Activated CD4-positive, alpha-beta T cell treated with anti-CD3 and anti-CD28 coated beads, Interleukin-2, amount 10 ng/mL, durations not matched to agents 24 days and 14 days (primary cell): ENCODE measurements at regions of chr16 and their contacts with region 1.

Region 1: GRCh38 chr16:67561824-67562525 is 351 bp upstream of the CTCF start:
- DNase-seq: peak; percentile 99
- H3K4me3 Mint-ChIP-seq: peak overlapping the region; percentile 89
- H3K27ac Mint-ChIP-seq: peak overlapping the region; percentile 93
- H3K4me1 Mint-ChIP-seq: peaks cover 30% of the 10 kb centered on the region
- H3K27me3 Mint-ChIP-seq: no peaks in the 10 kb centered on the region

Region 2: DNA sequence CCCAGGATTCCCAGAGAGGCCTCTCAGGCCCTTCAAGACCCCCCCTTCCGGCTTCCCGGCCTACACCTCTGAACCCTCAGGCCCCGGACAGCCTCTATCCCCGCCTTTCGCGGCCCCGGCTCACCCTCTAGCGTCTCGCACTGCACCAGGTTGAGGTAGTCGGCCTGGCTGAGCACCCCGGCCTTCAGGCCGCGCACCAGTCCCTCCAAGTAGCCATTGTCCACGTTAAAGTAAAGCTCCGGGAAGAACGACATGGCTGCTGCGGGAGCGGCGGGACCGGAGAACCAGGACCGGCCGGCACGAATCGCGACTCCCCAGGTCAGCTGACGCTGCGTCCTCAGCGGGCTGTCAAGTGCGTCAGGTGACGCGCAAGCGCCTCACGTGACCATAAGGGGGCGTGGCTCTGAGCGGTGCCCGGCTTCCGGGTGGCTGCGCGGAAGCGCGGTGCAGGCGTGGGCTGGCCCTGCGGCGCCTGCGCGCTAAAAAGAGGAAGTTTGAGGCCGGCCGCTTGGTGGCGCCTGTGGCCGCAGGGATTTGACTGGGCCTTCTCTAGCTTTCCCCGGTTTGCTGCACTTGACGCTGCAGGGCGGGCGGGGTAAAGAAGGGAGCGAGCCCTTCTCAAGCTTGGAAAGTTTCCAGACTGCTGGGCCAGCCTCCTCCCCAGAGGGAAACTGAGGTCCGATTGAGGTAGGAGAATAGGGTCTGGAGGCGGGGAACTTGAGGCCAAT is 81.0 kb before region 1 on chr16 and contains the start of gene ATP6V0D1:
- intact Hi-C with region 1: loop called (anchors 1 kb)
- DNase-seq: peak; percentile 100
- H3K4me3 Mint-ChIP-seq: peak within 1 kb of the TSS; percentile 100
- H3K27ac Mint-ChIP-seq: peak within 1 kb of the TSS; percentile 97
- H3K4me1 Mint-ChIP-seq: peaks cover 17% of the 10 kb centered on the region
- H3K27me3 Mint-ChIP-seq: no peaks in the 10 kb centered on the region
- total RNA-seq, gene ATP6V0D1: 30.9 and 31.8 TPM in 2 replicates

Region 3: GRCh38 chr16:67546761-67547422 is 15.1 kb before region 1 on chr16:
- intact Hi-C with region 1: loop called (anchors 1 kb)
- DNase-seq: peak; percentile 92
- H3K4me3 Mint-ChIP-seq: peak overlapping the region; percentile 58
- H3K27ac Mint-ChIP-seq: peak overlapping the region; percentile 89
- H3K4me1 Mint-ChIP-seq: peaks cover 35% of the 10 kb centered on the region
- H3K27me3 Mint-ChIP-seq: no peaks in the 10 kb centered on the region

Region 4: DNA sequence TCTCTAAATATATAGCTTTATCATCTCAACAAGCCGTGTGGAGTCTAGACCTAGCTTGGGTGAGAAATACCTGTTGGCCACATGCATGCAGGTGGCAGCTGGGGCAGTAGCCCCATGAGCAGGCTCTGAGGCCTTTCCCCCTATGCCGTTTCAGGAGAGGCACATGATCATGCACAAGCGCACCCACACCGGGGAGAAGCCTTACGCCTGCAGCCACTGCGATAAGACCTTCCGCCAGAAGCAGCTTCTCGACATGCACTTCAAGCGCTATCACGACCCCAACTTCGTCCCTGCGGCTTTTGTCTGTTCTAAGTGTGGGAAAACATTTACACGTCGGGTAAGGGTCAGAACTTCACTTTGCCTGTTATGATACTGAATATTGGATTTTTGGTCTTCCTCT is 66.2 kb after region 1 on chr16:
- intact Hi-C with region 1: no loop called
- DNase-seq: no peak
- H3K4me3 Mint-ChIP-seq: no peak overlapping the region
- H3K27ac Mint-ChIP-seq: no peak overlapping the region
- H3K4me1 Mint-ChIP-seq: no peaks in the 10 kb centered on the region
- H3K27me3 Mint-ChIP-seq: no peaks in the 10 kb centered on the region

Region 5: GRCh38 chr16:67645397-67646121 is 83.6 kb after region 1 on chr16:
- intact Hi-C with region 1: loop called (anchors 1 kb)
- DNase-seq: no peak
- H3K4me3 Mint-ChIP-seq: peak overlapping the region; percentile 88
- H3K27ac Mint-ChIP-seq: peak overlapping the region; percentile 88
- H3K4me1 Mint-ChIP-seq: peaks cover 17% of the 10 kb centered on the region
- H3K27me3 Mint-ChIP-seq: no peaks in the 10 kb centered on the region

Region 6: GRCh38 chr16:67719048-67719777 is 157.2 kb after region 1 on chr16 and contains the start of gene GFOD2:
- intact Hi-C with region 1: loop called (anchors 2 kb)
- DNase-seq: peak; percentile 100
- H3K4me3 Mint-ChIP-seq: peak within 1 kb of the TSS; percentile 88
- H3K27ac Mint-ChIP-seq: peak within 1 kb of the TSS; percentile 96
- H3K4me1 Mint-ChIP-seq: peaks cover 32% of the 10 kb centered on the region
- H3K27me3 Mint-ChIP-seq: no peaks in the 10 kb centered on the region
- total RNA-seq, gene GFOD2: 16.2 and 18.3 TPM in 2 replicates

Region 7: GRCh38 chr16:67935402-67936123 is 373.6 kb after region 1 on chr16:
- intact Hi-C with region 1: loop called (anchors 1 kb)
- DNase-seq: peak; percentile 98
- H3K4me3 Mint-ChIP-seq: peak overlapping the region; percentile 100
- H3K27ac Mint-ChIP-seq: peak overlapping the region; percentile 92
- H3K4me1 Mint-ChIP-seq: peaks cover 33% of the 10 kb centered on the region
- H3K27me3 Mint-ChIP-seq: no peaks in the 10 kb centered on the region

Region 8: DNA sequence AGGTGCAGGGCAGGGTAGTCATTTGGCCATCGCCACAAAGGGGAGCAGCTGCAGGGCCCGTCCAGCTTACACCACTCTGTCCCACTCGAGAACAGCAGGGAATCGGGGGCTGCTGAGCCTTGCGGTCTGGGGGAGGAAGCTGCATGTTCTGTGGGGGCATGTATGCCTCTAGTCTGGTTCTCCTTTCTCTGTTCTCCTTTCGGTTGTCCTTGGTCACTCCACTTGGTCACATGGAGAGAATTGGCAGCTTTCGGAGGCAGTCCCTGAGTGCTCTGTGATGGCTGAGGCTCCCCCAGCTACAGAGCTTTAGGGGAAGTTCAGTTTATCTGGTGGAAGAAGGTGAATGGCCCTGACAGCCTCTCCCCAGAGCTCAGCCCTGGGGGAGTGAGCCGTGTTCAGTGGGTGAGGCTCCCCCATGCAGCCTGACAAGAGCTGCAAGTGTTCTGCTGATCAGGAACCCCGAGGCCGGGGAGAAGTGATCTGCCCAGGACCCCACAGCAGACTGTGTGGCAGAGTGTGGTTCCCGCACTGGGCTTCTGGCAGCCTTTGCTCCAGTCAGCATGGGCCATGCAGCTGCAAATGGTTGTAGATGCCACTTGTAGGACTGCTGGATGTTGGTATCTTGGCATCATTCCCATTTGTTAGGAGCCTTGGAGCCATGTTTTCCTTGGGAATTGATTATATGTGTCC is 908.6 kb after region 1 on chr16:
- intact Hi-C with region 1: no loop called
- DNase-seq: no peak
- H3K4me3 Mint-ChIP-seq: peak overlapping the region; percentile 70
- H3K27ac Mint-ChIP-seq: peak overlapping the region; percentile 81
- H3K4me1 Mint-ChIP-seq: peaks cover 21% of the 10 kb centered on the region
- H3K27me3 Mint-ChIP-seq: peaks cover 10% of the 10 kb centered on the region